Activated CD4-positive, alpha-beta T cell treated with anti-CD3 and anti-CD28 coated beads, Interleukin-2, amount 10 ng/mL, durations not matched to agents 24 days and 14 days (primary cell): ENCODE measurements at regions of chr13 and their contacts with region 1.

Region 1: GRCh38 chr13:25762795-25763377 is 288.9 kb downstream of the SHISA2 start:
- DNase-seq: peak; percentile 78
- H3K4me3 Mint-ChIP-seq: peak overlapping the region; percentile 57
- H3K27ac Mint-ChIP-seq: peak overlapping the region; percentile 79
- H3K4me1 Mint-ChIP-seq: peaks cover 29% of the 10 kb centered on the region
- H3K27me3 Mint-ChIP-seq: peaks cover 2% of the 10 kb centered on the region

Region 2: DNA sequence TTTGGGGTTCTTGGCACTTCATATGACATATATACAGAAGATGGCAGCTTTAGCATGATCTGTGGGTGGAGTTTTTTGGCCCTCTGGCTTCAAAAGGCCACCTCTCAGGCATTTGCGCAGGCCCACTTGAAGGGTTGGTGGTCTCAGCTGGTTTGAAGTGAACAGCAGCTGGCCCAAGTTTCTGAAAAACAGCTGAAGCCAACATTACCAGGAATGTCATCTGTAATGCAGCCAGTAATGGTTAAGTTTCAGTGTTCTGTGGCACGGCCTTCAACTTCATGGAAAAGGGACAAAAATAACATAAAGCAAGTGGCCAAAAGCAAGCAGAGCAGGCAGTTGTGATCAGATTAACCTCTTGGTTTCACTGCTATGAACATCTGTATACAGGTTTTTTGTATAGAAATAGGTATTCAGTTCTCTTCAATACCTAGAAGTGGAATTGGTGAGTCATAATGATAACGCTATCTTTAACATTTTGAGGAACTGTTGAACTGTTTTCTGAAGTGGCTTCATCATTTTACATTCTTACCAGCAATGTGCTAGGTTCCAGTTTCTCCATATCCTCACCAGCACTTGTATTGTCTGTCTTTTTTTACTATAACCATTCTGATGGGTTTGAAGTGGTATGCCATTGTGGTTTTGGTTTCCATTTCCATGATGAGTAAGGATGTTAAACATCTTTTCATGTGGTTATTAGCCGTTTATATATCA is 43.5 kb after region 1 on chr13:
- intact Hi-C with region 1: loop called (anchors 2 kb)
- DNase-seq: peak; percentile 72
- H3K4me3 Mint-ChIP-seq: no peak overlapping the region
- H3K27ac Mint-ChIP-seq: peak overlapping the region; percentile 73
- H3K4me1 Mint-ChIP-seq: peaks cover 16% of the 10 kb centered on the region
- H3K27me3 Mint-ChIP-seq: no peaks in the 10 kb centered on the region

Region 3: DNA sequence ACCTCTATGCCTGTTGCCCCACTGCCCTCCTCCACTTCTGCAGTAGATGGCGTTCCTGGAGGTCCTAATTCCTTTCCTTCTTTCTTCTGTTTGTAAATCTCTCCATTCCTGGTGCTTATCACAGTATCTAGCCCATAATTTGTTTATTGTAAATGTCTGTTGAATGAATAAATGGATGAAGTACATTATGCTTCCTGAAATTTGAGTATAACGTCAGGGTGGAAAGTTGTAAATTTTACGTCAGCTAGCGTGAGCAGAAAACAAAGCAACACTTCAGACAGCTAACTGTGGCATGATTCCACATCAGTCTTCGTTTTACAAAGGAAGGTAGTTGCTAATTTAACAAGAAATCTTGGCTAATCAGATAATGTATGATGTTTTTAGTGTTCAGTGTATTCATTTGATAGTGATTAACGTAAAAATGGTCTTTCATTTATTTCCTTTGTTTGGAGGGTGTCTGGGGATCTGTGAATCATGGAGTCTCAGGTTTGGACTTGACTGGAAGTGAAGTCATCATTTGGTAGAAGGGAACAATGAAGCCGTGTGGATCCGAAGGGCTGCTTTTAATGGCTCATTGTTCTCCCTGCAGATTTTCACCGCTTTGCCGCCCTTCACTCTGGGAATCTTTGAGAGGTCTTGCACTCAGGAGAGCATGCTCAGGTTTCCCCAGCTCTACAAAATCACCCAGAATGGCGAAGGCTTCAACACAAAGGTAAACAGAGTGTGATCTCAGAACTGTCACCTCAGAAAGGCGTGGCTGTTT is 73.9 kb after region 1 on chr13:
- intact Hi-C with region 1: no loop called
- DNase-seq: no peak
- H3K4me3 Mint-ChIP-seq: no peak overlapping the region
- H3K27ac Mint-ChIP-seq: no peak overlapping the region
- H3K4me1 Mint-ChIP-seq: no peaks in the 10 kb centered on the region
- H3K27me3 Mint-ChIP-seq: peaks cover 10% of the 10 kb centered on the region

Region 4: GRCh38 chr13:25886438-25887214 is 123.7 kb after region 1 on chr13:
- intact Hi-C with region 1: loop called (anchors 5 kb)
- DNase-seq: no peak
- H3K4me3 Mint-ChIP-seq: no peak overlapping the region
- H3K27ac Mint-ChIP-seq: peak overlapping the region; percentile 35
- H3K4me1 Mint-ChIP-seq: peaks cover 41% of the 10 kb centered on the region
- H3K27me3 Mint-ChIP-seq: no peaks in the 10 kb centered on the region

Region 5: GRCh38 chr13:25958986-25959385 is 196.1 kb after region 1 on chr13:
- intact Hi-C with region 1: no loop called
- DNase-seq: peak; percentile 66
- H3K4me3 Mint-ChIP-seq: peak overlapping the region; percentile 51
- H3K27ac Mint-ChIP-seq: peak overlapping the region; percentile 76
- H3K4me1 Mint-ChIP-seq: peaks cover 27% of the 10 kb centered on the region
- H3K27me3 Mint-ChIP-seq: no peaks in the 10 kb centered on the region

Region 6: DNA sequence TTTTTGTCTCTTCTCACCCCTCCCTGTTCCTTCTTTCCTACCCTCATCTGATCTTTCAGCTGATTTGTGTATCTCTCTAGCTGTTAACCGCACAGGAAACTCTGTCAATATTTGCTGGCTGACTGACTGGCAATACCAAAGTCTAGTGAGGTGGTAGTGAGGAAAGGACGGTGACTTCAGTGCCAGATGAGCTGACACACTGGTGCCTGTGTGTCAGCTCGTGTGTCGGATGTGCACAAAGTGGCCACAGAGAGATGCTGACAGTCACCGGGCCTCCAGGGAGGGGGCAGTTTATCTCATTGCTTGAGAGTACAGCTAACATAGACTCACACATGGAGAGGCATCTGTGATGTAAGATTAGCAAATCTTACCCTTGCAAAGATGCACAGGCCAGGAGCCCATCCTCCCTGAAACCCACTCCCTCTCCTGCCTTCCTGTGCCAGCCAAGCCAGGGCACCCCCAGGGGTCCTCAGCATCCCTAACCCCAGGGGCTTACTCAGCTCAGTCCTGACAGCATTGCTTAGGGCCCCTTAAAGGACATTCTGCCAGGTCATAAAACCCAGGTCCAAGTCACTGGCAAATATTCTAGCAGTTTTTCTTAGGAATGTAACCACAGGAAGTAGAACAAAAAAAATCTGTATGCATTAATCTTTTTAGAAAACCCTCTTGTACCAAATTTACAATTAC is 208.7 kb after region 1 on chr13:
- intact Hi-C with region 1: loop called (anchors 5 kb)
- DNase-seq: peak; percentile 83
- H3K4me3 Mint-ChIP-seq: peak overlapping the region; percentile 36
- H3K27ac Mint-ChIP-seq: peak overlapping the region; percentile 51
- H3K4me1 Mint-ChIP-seq: peaks cover 43% of the 10 kb centered on the region
- H3K27me3 Mint-ChIP-seq: no peaks in the 10 kb centered on the region